ENCODE measurements at regions of chr2 and their contacts with region 1.

Region 1: DNA sequence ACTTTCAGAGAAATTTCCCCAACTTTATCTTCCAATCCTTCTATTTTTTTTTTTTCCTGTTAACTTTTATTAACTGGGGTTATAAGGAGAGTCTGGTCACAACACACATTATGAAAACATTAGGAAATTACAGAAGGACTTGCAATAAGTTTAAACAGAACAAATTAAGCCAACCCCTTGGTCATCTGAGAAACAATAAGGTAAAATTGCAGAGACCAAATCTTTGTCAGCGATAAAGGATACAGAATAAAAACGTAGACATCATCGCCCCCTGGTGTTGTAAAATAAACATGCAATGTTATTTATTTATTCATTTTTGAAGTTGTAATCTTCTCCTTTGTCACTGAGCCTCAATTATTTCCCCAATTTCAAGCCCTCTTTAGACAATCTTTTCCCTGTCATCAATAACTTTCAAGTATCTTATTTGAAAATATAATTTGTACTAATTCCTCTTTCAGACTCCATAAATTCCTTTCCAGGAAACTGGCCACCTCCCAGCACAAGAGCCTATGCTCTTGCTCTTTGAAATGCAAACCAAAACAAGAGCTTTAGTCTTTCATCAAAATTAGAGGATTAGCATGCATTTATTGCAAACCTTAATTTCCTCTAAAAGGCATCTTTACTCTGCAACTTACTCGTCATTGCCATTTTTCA is 19.5 kb downstream of the G6PC2 start:
- DNase-seq: no peak
- H3K4me3 ChIP-seq: no peak overlapping the region
- H3K27ac ChIP-seq: no peak overlapping the region
- H3K27me3 ChIP-seq: peaks cover 0 to 4% (median 0%) of the 10 kb centered on the region in 45 donors
- CTCF ChIP-seq: peak; percentile 40 to 76 (median 60)

Region 2: DNA sequence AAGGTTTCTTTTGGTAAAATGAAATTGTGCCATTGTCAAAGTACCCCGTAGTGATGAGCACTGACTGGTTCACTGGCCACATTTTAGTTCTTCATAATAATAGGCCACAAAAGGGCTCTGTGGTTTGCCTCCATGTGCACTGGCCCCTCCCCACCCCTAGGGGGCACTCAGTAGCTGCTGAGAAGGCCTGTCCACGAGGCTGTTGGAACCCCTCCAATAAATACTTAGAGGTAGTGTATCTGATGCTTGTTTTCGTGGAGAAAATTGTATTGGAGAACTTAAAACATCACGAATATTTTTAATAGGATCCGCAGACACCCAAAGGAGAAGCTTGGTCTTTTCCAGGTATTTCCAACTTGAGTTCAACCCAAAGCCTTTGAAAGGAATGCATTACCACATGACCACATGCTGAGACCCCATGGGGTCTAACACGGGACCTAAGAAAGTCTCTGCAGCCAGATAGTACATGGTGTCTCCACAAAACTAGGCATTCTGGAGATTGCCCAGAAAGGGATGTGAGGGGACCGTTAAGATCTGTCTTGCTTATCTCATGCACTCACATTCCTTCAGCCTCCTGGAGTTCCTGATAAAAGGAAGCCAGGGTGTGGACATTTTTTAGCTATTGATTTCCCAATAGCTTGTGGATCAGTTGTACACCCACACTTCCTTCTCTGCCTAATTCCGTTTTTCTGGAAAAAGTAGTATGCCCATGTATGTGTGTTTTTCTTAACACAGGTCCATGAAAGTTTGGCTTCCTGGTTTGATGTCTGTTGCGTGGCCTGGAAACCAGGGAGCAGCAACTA is 146.7 kb before region 1 on chr2:
- intact Hi-C with region 1: loop called in 1 of 2 experiments (anchors 5 kb)
- DNase-seq: peak in 2 of 10 donors; percentile 29 to 43
- H3K4me3 ChIP-seq: no peak overlapping the region
- H3K27ac ChIP-seq: no peak overlapping the region
- H3K27me3 ChIP-seq: no peaks in the 10 kb centered on the region
- CTCF ChIP-seq: peak; percentile 43 to 78 (median 68)

Region 3: DNA sequence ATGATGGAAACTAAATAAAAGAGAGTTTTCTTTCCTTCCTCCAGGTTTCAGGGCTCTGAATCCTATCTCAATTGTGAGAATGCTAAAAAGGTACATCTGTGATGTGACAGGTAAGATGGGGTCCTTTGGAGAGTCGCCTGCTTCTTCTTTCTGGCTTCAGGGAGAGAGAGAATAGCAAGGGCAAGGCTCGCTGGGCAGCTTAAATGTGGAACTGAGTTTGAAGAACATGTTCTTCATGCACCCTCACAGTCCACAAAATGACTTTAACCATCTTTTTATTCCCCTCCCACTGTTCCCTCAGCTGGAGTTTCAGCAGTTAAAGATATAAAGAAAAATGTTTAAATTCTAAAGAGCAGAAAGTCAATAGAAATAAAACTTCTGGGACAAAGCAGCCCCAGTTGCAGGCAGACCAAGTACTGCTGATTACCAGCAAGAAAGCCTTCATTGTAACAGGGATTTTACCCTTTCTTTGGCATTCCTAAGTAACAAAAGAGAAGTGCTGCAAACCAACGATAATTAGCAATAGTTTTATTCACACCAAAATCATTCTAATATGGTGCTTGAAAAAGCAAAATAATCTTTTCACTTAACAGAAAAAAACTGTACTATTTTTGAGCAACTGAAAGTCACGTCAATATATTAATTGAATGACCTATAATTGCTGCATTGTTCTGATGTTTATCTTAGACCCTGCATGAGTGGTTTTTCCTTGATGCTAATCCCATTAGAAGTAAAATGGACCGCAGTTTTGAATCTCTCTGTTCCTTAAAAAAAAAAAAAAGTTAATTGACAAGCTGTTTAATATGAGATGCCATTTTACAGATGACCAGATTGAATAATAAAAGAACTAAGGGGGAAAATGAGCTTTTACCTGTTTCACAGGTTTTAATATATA is 380.3 kb after region 1 on chr2:
- intact Hi-C with region 1: no loop called
- DNase-seq: no peak
- H3K4me3 ChIP-seq: peak overlapping the region in 24 of 59 donors; percentile 2 to 35 (median 13)
- H3K27ac ChIP-seq: peak overlapping the region in 58 of 59 donors; percentile 15 to 94 (median 80)
- H3K27me3 ChIP-seq: peaks cover 0 to 9% (median 0%) of the 10 kb centered on the region in 45 donors
- CTCF ChIP-seq: no peak

Region 4: DNA sequence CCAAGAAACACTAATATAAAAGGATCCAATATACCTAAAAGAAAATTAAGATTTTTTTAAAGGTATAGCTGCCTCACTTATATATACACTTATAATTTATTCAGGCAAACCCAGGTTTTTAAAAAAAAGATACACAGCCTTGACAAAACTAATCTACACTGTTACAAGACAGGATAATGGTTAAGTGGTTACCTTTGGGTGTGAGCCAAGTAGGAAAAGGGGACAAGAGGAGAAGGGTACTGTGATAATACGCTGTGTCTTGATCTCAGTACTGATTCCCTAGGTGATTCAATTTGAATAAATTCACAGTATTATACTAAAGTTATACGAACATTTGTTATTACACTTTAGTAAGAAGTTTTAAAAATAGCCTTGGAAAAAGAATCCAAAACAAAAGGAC is 619.5 kb after region 1 on chr2:
- intact Hi-C with region 1: no loop called
- DNase-seq: no peak
- H3K4me3 ChIP-seq: no peak overlapping the region
- H3K27ac ChIP-seq: no peak overlapping the region
- H3K27me3 ChIP-seq: no peaks in the 10 kb centered on the region
- CTCF ChIP-seq: no peak

Measured in dorsolateral prefrontal cortex (tissue), 120 donors.